B cell (primary cell): ENCODE measurements at regions of chr19 and their contacts with region 1.

Region 1: GRCh38 chr19:16584248-16585141 is 12.3 kb upstream of the SLC35E1 start:
- DNase-seq: peak; percentile 98
- ATAC-seq: peak; percentile 53
- H3K4me3 ChIP-seq: peak overlapping the region; percentile 68 to 93 (median 85)
- H3K4me3 Mint-ChIP-seq: peak overlapping the region; percentile 97
- H3K27ac ChIP-seq: peak overlapping the region; percentile 98 to 99
- H3K27ac Mint-ChIP-seq: peak overlapping the region; percentile 100
- H3K4me1 ChIP-seq: peaks cover 62 to 80% of the 10 kb centered on the region in 2 donors
- H3K4me1 Mint-ChIP-seq: peaks cover 89% of the 10 kb centered on the region
- H3K27me3 ChIP-seq: no peaks in the 10 kb centered on the region
- H3K27me3 Mint-ChIP-seq: no peaks in the 10 kb centered on the region
- CTCF ChIP-seq: no peak

Region 2: GRCh38 chr19:16143399-16144245 is 440.9 kb before region 1 on chr19 and contains the start of gene HSH2D:
- CTCF ChIA-PET with region 1: no interaction called
- POLR2A ChIA-PET with region 1: interaction called, 9 read pairs
- intact Hi-C with region 1: loop called (anchors 5 kb)
- DNase-seq: peak; percentile 95
- ATAC-seq: peak; percentile 71
- H3K4me3 ChIP-seq: peak within 1 kb of the TSS; percentile 73 to 94 (median 91)
- H3K4me3 Mint-ChIP-seq: peak within 1 kb of the TSS; percentile 95
- H3K27ac ChIP-seq: peak within 1 kb of the TSS; percentile 95 to 97
- H3K27ac Mint-ChIP-seq: peak within 1 kb of the TSS; percentile 100
- H3K4me1 ChIP-seq: peaks cover 71 to 93% of the 10 kb centered on the region in 2 donors
- H3K4me1 Mint-ChIP-seq: peaks cover 78% of the 10 kb centered on the region
- H3K27me3 ChIP-seq: no peaks in the 10 kb centered on the region
- H3K27me3 Mint-ChIP-seq: no peaks in the 10 kb centered on the region
- CTCF ChIP-seq: no peak
- total RNA-seq, gene HSH2D: 254 and 259 TPM in 2 replicates

Region 3: GRCh38 chr19:16371540-16371986 is 212.9 kb before region 1 on chr19:
- CTCF ChIA-PET with region 1: no interaction called
- POLR2A ChIA-PET with region 1: interaction called, 3 read pairs
- intact Hi-C with region 1: loop called (anchors 5 kb)
- DNase-seq: peak; percentile 93
- ATAC-seq: peak; percentile 73
- H3K4me3 ChIP-seq: peak overlapping the region; percentile 15 to 47 (median 19)
- H3K4me3 Mint-ChIP-seq: no peak overlapping the region
- H3K27ac ChIP-seq: peak overlapping the region; percentile 85 to 94
- H3K27ac Mint-ChIP-seq: no peak overlapping the region
- H3K4me1 ChIP-seq: peaks cover 94 to 100% of the 10 kb centered on the region in 2 donors
- H3K4me1 Mint-ChIP-seq: peaks cover 38% of the 10 kb centered on the region
- H3K27me3 ChIP-seq: no peaks in the 10 kb centered on the region
- H3K27me3 Mint-ChIP-seq: no peaks in the 10 kb centered on the region
- CTCF ChIP-seq: peak; percentile 27

Region 4: GRCh38 chr19:16542045-16542909 is 42.2 kb before region 1 on chr19 and contains the start of gene CHERP:
- CTCF ChIA-PET with region 1: interaction called, 4 read pairs
- POLR2A ChIA-PET with region 1: interaction called, 7 read pairs
- intact Hi-C with region 1: loop called (anchors 1 kb)
- DNase-seq: peak; percentile 97
- ATAC-seq: peak; percentile 81
- H3K4me3 ChIP-seq: peak within 1 kb of the TSS; percentile 76 to 90 (median 88)
- H3K4me3 Mint-ChIP-seq: peak within 1 kb of the TSS; percentile 91
- H3K27ac ChIP-seq: peak within 1 kb of the TSS; percentile 61 to 77
- H3K27ac Mint-ChIP-seq: peak within 1 kb of the TSS; percentile 89
- H3K4me1 ChIP-seq: peaks cover 29 to 52% of the 10 kb centered on the region in 2 donors
- H3K4me1 Mint-ChIP-seq: peaks cover 55% of the 10 kb centered on the region
- H3K27me3 ChIP-seq: no peaks in the 10 kb centered on the region
- H3K27me3 Mint-ChIP-seq: no peaks in the 10 kb centered on the region
- CTCF ChIP-seq: no peak
- total RNA-seq, gene CHERP: 87.3 and 98.9 TPM in 2 replicates

Region 5: DNA sequence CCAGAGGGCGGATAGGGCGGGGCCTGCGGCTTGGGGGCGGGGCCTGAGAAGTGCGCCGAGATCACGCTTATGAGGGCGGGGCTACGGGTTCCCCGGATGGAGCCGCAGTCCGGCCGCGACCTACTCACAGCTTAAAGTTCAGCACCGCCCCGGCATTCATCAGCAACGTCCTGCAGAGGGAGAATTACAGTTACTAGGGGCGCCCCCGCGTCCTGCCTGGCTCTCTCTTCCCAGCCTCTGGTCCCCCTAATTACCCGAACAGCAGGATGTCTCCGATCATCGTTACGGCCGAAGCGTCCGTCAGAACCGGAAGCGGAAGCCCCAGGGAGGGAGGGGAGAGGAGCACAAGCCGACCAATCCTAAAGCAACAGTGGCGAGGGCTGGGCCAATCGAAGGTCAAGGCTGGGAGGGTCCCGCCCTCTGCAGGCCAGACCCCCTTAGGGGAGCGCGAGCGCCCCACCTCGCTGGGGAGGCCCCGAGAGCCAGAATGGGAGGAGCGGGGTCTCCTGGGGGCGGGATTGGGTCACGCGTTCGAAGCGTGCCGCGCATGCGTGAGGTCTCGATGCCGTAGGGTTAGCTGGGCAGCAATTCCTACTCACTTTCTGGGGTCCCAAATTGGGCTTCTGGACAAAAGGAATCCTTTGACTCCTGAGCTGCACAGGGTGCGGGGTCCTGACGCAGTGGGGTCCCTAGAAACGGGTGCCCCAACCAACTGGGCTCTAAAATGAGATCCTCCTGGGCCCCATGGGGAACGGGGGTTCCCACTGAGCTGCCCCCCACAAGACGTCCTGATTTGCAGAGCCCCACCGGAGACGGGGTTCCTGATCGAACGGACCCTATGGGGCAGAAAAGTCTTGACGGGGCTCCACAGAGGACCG is 75.6 kb after region 1 on chr19 and contains the start of gene SMIM7:
- CTCF ChIA-PET with region 1: interaction called, 8 read pairs
- POLR2A ChIA-PET with region 1: interaction called, 35 read pairs
- intact Hi-C with region 1: loop called (anchors 1 kb)
- DNase-seq: peak; percentile 100
- ATAC-seq: peak; percentile 93
- H3K4me3 ChIP-seq: peak within 1 kb of the TSS; percentile 62 to 89 (median 83)
- H3K4me3 Mint-ChIP-seq: peak within 1 kb of the TSS; percentile 99
- H3K27ac ChIP-seq: peak within 1 kb of the TSS; percentile 70 to 79
- H3K27ac Mint-ChIP-seq: peak within 1 kb of the TSS; percentile 97
- H3K4me1 ChIP-seq: peaks cover 26 to 42% of the 10 kb centered on the region in 2 donors
- H3K4me1 Mint-ChIP-seq: peaks cover 46% of the 10 kb centered on the region
- H3K27me3 ChIP-seq: no peaks in the 10 kb centered on the region
- H3K27me3 Mint-ChIP-seq: no peaks in the 10 kb centered on the region
- CTCF ChIP-seq: no peak
- total RNA-seq, gene SMIM7: 132 and 133 TPM in 2 replicates

Region 6: GRCh38 chr19:16756487-16757048 is 172.1 kb after region 1 on chr19:
- CTCF ChIA-PET with region 1: no interaction called
- POLR2A ChIA-PET with region 1: no interaction called
- intact Hi-C with region 1: no loop called
- DNase-seq: no peak
- ATAC-seq: no peak
- H3K4me3 ChIP-seq: no peak overlapping the region
- H3K4me3 Mint-ChIP-seq: no peak overlapping the region
- H3K27ac ChIP-seq: no peak overlapping the region
- H3K27ac Mint-ChIP-seq: no peak overlapping the region
- H3K4me1 ChIP-seq: no peaks in the 10 kb centered on the region
- H3K4me1 Mint-ChIP-seq: peaks cover 3% of the 10 kb centered on the region
- H3K27me3 ChIP-seq: peaks cover 0 to 10% (median 5%) of the 10 kb centered on the region in 4 experiments
- H3K27me3 Mint-ChIP-seq: peaks cover 12% of the 10 kb centered on the region
- CTCF ChIP-seq: no peak